ENCODE measurements at regions of chr3 and their contacts with region 1.

Region 1: DNA sequence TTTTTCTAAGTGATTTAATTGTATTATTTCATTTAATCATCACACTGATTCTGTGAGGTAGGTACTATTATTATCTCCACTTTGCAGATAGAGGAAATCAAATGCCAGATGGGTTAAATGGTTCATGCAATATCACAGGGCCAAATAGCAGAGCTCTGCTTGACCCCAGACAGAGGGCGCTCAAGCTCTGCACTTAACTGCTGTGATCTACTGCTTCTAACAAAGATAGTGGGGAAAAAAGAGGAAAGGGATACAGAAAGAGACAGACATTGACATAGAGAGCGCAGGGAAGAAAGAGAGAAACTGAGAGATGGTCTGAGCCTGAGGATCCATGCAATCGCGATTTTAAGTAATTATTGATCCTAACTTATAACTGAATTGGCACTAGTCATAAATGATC is 279.1 kb upstream of the THRB start:
- DNase-seq: no peak
- H3K4me3 ChIP-seq: no peak overlapping the region
- H3K27ac ChIP-seq: no peak overlapping the region
- H3K4me1 ChIP-seq: no peaks in the 10 kb centered on the region
- H3K27me3 ChIP-seq: no peaks in the 10 kb centered on the region
- CTCF ChIP-seq: peak; percentile 42 to 71 (median 70)

Region 2: DNA sequence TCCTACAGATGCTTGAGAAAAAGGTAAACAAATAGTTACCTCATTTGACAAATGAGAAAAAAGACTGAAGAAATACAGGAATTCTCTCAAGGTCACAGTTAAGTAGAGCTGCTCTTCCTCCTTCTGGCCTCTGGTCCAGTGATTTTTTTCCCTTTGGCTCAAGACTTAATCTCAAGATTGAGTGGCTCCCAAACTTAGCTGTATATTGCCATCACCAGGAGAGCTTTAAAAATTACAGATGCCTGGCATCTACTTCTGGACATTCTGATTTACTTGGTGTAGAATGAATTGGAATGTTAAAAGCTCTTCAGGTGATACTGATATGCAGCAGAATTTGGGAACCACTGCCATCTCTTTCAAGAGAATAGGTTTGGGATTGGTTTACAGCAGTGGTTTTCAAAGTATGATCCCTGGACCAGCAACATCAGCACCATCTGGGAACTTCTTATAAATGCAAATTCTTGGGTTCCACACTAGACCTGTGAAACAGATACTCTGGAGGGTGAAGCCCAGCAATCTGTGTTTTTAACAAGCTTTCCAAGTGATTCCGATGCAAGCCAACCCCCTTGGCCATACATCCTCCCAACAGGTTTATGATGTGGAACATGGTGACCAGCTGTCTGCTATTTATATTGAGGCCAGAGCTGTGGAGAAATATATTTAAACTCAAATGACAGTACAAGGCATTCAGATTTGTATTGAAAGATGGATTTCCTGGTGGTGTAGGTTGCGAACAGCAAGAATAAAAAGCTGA is 321.3 kb after region 1 on chr3:
- intact Hi-C with region 1: loop called (anchors 10 kb)
- DNase-seq: no peak
- H3K4me3 ChIP-seq: no peak overlapping the region
- H3K27ac ChIP-seq: no peak overlapping the region
- H3K4me1 ChIP-seq: no peaks in the 10 kb centered on the region
- H3K27me3 ChIP-seq: no peaks in the 10 kb centered on the region
- CTCF ChIP-seq: peak in 1 of 3 experiments; percentile 36

Measured in ascending aorta (tissue), 2 donors.